Gastrocnemius medialis (tissue), 4 donors: ENCODE measurements at regions of chr17 and their contacts with region 1.

Region 1: GRCh38 chr17:50719144-50719923 is at the start of gene LUC7L3:
- DNase-seq: peak; percentile 91
- ATAC-seq: peak; percentile 96
- H3K4me3 ChIP-seq: peak within 1 kb of the TSS; percentile 76 to 98 (median 84)
- H3K27ac ChIP-seq: peak within 1 kb of the TSS; percentile 92 to 98 (median 97)
- H3K4me1 ChIP-seq: peaks cover 37 to 40% of the 10 kb centered on the region in 2 donors
- H3K27me3 ChIP-seq: no peaks in the 10 kb centered on the region
- CTCF ChIP-seq: no peak
- POLR2A ChIP-seq: peak; percentile 87 to 88
- total RNA-seq, gene LUC7L3: 10.4 to 67.3 (median 25.7) TPM

Region 2: GRCh38 chr17:49788478-49789242 is 930.7 kb before region 1 on chr17 and contains the start of gene KAT7:
- in situ Hi-C with region 1: loop called in 1 of 4 experiments (anchors 25 kb)
- intact Hi-C with region 1: loop called (anchors 5 kb)
- DNase-seq: peak; percentile 99 to 100
- ATAC-seq: peak; percentile 94 to 96
- H3K4me3 ChIP-seq: peak within 1 kb of the TSS; percentile 87 to 98 (median 92)
- H3K27ac ChIP-seq: peak within 1 kb of the TSS; percentile 97 to 100 (median 99)
- H3K4me1 ChIP-seq: peaks cover 46 to 47% of the 10 kb centered on the region in 2 donors
- H3K27me3 ChIP-seq: no peaks in the 10 kb centered on the region
- CTCF ChIP-seq: no peak
- POLR2A ChIP-seq: peak; percentile 94 to 96
- total RNA-seq, gene KAT7: 32.6 to 49.8 (median 45.2) TPM

Region 3: DNA sequence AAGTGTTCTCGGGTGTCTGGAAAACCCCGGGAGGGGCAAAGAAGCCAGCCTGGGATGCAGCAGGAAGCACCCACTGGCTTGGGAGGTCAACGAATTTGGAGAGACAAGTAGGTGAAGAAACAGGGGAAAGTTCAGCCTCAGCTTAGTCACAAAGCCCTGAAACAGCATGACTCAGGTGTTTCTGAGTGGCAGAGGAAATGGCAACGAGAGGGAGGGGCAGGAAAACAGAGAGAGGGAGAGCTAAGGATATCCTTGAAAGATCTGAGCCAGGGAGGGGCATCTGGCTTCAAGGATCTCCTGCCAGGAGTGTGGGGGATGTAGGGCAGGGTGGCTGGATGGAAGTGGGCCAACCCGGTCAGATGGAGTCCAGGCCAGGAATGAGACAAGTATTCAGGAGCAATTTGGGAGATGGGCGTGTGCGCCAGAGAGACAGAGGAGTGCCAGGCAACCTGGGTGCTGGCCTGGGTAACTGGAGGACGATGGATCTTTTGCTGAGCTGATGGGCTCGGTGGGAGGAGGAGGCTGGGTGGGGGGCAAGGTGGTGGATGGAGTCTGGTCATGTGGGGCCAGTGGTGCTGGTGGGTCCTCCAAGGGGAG is 57.4 kb before region 1 on chr17:
- in situ Hi-C with region 1: no loop called
- intact Hi-C with region 1: no loop called
- DNase-seq: peak; percentile 38 to 41
- ATAC-seq: peak; percentile 88 to 90
- H3K4me3 ChIP-seq: no peak overlapping the region
- H3K27ac ChIP-seq: peak overlapping the region; percentile 2 to 75 (median 31)
- H3K4me1 ChIP-seq: peaks cover 21 to 26% of the 10 kb centered on the region in 2 donors
- H3K27me3 ChIP-seq: no peaks in the 10 kb centered on the region
- CTCF ChIP-seq: no peak
- POLR2A ChIP-seq: no peak

Region 4: DNA sequence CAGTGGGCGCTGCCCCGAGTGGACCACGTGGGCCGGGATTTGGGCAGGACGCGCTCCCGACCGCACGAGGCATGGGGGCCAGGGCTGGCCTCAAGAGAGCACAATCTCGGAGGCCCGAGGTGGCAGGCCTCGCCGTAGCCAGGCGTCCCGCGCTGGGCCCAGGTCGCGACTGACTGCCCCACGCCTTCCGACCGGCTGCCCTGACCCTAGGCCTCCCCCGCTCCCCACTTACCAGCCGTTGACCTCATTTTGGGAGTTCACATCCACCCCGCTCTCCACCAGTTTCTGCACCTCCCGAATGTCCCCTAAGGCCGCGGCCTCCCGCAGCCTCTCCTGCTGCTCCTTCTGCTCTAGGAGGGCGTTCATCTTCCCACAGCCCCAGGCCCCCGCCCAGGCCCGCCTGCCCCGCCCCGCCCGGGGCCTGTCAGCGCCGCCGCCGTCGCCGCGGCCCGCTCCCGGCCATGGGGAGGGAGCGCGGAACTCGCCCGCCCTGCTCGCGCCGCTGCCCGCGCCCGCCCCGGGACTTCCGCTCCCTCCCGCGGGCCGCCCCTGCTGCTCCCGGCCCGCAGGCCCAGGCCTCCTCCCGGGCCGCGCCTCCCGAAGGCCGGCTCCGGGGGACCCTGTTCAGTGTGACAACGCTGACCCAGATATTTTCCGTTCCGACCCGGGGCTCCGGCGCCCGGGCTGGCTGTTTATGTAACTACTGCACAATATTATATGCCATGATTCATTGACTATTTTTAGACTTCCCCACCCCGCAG is 11.9 kb before region 1 on chr17 and contains the start of gene ANKRD40:
- in situ Hi-C with region 1: no loop called
- intact Hi-C with region 1: loop called (anchors 1 kb)
- DNase-seq: peak; percentile 90 to 93
- ATAC-seq: peak; percentile 94 to 95
- H3K4me3 ChIP-seq: peak within 1 kb of the TSS; percentile 64 to 83 (median 76)
- H3K27ac ChIP-seq: peak within 1 kb of the TSS; percentile 90 to 97 (median 96)
- H3K4me1 ChIP-seq: peaks cover 42 to 43% of the 10 kb centered on the region in 2 donors
- H3K27me3 ChIP-seq: no peaks in the 10 kb centered on the region
- CTCF ChIP-seq: peak in 2 of 5 experiments; percentile 10 to 26
- POLR2A ChIP-seq: peak; percentile 87 to 88
- total RNA-seq, gene ANKRD40: 97.3 to 135 (median 112) TPM

Region 5: DNA sequence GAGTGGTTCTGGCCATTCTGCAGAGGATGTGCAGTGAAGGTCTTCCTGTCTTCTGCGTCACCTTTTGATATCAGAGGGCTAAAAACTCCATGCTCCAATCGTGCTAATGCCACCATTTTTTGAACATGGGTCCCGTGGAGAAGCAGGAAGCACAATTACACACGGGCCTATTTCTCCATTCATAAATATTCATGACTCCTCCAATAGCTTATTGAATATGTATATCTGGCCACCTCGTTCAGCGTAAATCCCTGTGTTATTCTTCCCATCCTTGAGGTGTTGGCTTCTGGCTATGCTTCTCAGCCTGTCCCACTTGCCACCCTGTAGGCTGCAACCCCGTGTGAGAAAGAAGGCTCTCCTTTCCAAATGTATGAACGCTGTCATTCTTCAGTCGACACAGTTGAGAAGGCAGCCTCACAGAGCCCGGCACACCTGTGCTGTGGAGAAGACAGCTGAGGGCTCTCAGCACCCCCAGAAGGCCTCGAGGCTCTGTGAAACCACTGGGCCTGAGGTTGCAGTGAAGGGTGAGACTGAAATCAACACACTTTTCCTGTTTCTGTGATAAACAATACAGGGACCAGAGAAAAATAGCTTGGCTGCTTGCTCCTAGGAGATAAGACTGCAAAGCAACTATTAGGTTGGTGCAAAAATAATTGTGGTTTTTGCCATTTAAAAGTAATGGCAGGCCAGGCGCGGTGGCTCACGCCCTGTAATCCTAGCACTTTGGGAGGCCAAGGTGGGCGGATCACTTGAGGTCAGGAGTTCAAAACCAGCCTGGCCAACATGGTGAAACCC is 52.9 kb after region 1 on chr17:
- in situ Hi-C with region 1: no loop called
- intact Hi-C with region 1: no loop called
- DNase-seq: no peak
- ATAC-seq: no peak
- H3K4me3 ChIP-seq: no peak overlapping the region
- H3K27ac ChIP-seq: no peak overlapping the region
- H3K4me1 ChIP-seq: no peaks in the 10 kb centered on the region
- H3K27me3 ChIP-seq: no peaks in the 10 kb centered on the region
- CTCF ChIP-seq: no peak
- POLR2A ChIP-seq: no peak